ENCODE measurements at regions of chr10 and their contacts with region 1.

Region 1: DNA sequence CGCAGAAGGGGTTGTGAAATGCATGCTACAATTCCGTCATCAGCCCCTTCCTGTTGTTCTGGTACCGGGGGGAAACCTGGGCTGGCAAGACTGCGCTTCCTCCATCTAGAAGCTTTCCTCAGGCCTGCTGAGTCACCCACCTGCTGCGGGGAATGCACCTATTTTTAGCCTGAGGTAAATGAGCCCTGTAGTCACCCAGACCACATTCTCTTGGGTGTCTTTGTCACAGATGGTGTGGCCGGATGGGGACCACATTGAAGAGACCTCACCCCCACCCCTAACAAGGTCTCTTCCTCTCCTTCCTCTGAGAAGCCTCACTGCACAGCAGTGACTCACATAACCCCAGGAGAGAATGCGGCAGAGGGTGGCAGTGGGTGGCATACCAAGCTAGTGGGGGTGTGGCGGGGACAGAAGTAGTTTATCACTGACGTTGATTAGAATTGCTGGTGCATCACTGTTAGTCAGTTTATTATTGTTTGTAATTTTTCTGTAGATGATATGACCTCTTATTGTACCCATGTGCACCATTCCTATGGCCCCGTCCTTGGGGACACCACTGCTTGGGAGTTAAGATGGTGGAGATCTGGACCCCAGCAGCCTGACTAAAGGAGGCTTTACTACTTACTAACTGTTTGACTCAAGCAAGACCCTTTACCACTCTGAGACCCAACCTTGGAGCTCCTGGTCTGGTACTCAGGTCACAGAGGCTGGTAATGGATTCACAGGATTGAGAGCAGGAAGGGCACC is 83.0 kb upstream of the DUSP5 start:
- DNase-seq: peak; percentile 97
- ATAC-seq: peak; percentile 94
- H3K4me3 Mint-ChIP-seq: peak overlapping the region; percentile 37
- H3K27ac Mint-ChIP-seq: peak overlapping the region; percentile 89
- H3K4me1 Mint-ChIP-seq: peaks cover 63% of the 10 kb centered on the region
- H3K27me3 Mint-ChIP-seq: no peaks in the 10 kb centered on the region
- CTCF ChIP-seq: no peak

Region 2: GRCh38 chr10:110354322-110354766 is 60.4 kb before region 1 on chr10:
- CTCF ChIA-PET with region 1: interaction called, 15 read pairs
- POLR2A ChIA-PET with region 1: interaction called, 12 read pairs
- intact Hi-C with region 1: loop called (anchors 5 kb)
- DNase-seq: peak; percentile 95
- ATAC-seq: peak; percentile 40
- H3K4me3 Mint-ChIP-seq: no peak overlapping the region
- H3K27ac Mint-ChIP-seq: peak overlapping the region; percentile 87
- H3K4me1 Mint-ChIP-seq: peaks cover 60% of the 10 kb centered on the region
- H3K27me3 Mint-ChIP-seq: peaks cover 2% of the 10 kb centered on the region
- CTCF ChIP-seq: peak; percentile 90

Region 3: GRCh38 chr10:110425684-110426293 is 11.1 kb after region 1 on chr10:
- CTCF ChIA-PET with region 1: interaction called, 7 read pairs
- POLR2A ChIA-PET with region 1: interaction called, 15 read pairs
- intact Hi-C with region 1: no loop called
- DNase-seq: peak; percentile 91
- ATAC-seq: peak; percentile 89
- H3K4me3 Mint-ChIP-seq: peak overlapping the region; percentile 0
- H3K27ac Mint-ChIP-seq: peak overlapping the region; percentile 81
- H3K4me1 Mint-ChIP-seq: peaks cover 50% of the 10 kb centered on the region
- H3K27me3 Mint-ChIP-seq: no peaks in the 10 kb centered on the region
- CTCF ChIP-seq: no peak

Region 4: DNA sequence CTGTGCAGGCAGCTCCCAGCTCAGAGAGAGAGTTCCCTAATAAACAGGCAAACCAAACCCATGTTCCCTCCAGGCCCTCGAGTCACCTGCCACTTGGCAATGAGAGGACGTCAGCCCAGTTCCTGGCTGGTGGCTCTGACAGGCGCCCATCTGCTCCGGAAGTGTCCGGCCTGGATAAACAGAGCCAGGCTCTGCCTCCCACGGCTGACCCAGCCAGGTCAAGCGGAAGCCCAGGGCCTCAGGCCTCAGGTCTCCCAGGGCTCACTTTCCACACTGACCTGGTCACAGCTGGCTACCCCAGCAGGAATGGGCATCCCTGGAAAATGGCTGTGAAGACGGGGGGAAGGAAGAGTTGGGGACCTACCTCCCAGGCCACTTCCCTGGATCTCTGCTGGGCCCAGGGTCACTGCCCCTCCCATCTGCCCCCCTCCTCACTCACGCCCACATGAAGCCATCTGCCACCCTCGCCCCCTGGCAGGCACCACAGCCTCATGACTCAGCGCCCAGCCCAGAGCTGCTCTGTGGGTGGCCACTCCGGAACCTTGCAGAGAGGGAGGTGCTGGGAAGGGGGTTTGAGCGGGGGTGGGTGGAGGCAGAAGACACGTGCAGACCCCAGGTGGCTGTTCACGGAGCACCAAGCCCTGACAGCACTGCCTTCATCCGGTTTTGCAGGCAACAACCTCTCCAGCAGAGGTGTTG is 45.5 kb after region 1 on chr10:
- CTCF ChIA-PET with region 1: no interaction called
- POLR2A ChIA-PET with region 1: no interaction called
- intact Hi-C with region 1: no loop called
- DNase-seq: peak; percentile 69
- ATAC-seq: peak; percentile 77
- H3K4me3 Mint-ChIP-seq: no peak overlapping the region
- H3K27ac Mint-ChIP-seq: peak overlapping the region; percentile 48
- H3K4me1 Mint-ChIP-seq: peaks cover 42% of the 10 kb centered on the region
- H3K27me3 Mint-ChIP-seq: no peaks in the 10 kb centered on the region
- CTCF ChIP-seq: no peak

Region 5: DNA sequence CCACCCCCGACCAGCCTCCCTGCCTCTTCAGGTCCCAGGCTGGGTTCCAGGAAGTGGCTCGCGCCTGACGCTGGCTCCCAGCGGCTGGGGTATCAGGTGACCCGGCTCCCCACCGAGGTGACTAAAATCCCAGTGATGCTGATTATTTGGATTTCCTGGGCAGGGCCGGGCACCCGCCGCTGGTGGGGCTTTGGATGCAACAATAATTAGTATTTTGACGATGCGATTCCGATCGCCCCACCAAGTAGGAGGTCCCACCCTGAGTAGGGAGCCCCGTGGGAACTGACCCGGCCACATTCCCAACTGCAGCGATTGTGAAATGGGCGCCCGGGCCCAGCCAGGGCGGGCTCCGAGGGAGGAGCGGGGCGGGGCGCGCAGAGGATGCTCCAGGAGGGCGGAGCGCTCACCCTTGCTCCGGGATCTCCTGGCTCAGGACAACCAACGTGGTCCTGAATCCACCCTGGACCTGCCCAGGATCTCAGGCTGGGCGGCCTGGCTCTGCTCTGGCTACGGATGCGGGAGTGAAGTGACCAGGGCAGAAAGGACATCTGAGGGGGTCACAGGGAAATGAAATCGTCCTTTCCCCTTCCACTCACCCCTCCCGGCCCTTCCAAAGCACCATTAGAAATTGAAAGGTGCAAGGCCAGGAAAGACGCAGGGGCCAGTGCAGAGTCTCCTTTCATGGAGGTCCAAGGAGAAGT is 115.5 kb after region 1 on chr10:
- CTCF ChIA-PET with region 1: interaction called, 3 read pairs
- POLR2A ChIA-PET with region 1: interaction called, 4 read pairs
- intact Hi-C with region 1: loop called (anchors 2 kb)
- DNase-seq: peak; percentile 29
- ATAC-seq: no peak
- H3K4me3 Mint-ChIP-seq: no peak overlapping the region
- H3K27ac Mint-ChIP-seq: no peak overlapping the region
- H3K4me1 Mint-ChIP-seq: peaks cover 65% of the 10 kb centered on the region
- H3K27me3 Mint-ChIP-seq: no peaks in the 10 kb centered on the region
- CTCF ChIP-seq: no peak

Region 6: DNA sequence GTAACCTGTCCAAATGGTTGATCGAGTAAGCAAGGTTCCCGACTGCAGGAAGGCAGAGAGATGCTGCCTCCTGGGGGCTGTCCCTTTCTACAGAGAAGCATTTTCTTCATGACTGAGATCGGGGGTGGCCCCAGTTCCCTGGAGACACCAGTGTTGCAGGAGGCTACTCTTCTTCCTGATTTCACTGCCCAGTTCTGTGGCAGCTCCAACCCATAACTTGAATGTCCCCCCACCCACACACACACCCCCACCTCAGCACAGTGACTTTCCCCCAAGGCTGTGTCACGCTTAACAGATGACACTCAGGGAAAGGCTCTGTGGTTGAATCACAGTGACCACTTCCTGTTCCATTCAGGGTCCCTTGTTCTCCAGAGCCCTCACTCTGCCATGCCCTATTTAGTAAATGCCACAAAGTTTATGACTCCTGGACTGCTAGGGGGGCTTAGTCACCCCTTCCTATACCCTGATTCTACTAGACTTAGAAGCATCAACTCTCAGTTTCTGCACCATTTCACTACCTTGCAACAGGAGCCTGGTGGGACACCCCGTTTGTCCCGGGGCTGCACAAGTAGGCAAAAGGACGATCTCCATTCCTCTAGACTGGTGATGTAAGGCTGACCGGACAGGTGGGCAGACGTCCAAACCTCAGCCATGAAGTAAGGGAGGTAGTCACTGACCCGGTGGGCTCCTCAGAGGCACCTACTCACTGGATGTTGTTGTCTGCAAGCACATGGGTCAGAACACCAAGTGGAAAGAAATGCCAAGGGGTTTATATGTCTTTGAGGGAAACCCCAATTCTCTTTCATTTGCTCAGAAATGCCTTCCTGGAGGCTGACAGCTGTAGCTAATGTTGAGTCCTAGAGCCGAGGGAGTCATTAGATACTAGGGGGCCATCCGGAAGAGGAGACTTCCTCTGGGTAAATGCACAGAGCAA is 121.5 kb after region 1 on chr10:
- CTCF ChIA-PET with region 1: interaction called, 3 read pairs
- POLR2A ChIA-PET with region 1: interaction called, 4 read pairs
- intact Hi-C with region 1: loop called (anchors 1 kb)
- DNase-seq: peak; percentile 95
- ATAC-seq: peak; percentile 92
- H3K4me3 Mint-ChIP-seq: peak overlapping the region; percentile 24
- H3K27ac Mint-ChIP-seq: peak overlapping the region; percentile 90
- H3K4me1 Mint-ChIP-seq: peaks cover 46% of the 10 kb centered on the region
- H3K27me3 Mint-ChIP-seq: no peaks in the 10 kb centered on the region
- CTCF ChIP-seq: no peak

Measured in activated CD8-positive, alpha-beta T cell treated with anti-CD3 and anti-CD28 coated beads for 36 hours (primary cell).